H1 (cell line): ENCODE measurements at regions of chr6 and their contacts with region 1.

Region 1: GRCh38 chr6:41581381-41581991 is 35.3 kb downstream of the FOXP4 start:
- DNase-seq: no peak
- H3K4me3 ChIP-seq: no peak overlapping the region
- H3K27ac ChIP-seq: no peak overlapping the region
- H3K4me1 ChIP-seq: peaks cover 16 to 48% (median 36%) of the 10 kb centered on the region in 4 experiments
- H3K27me3 ChIP-seq: no peaks in the 10 kb centered on the region
- CTCF ChIP-seq: no peak
- EP300 ChIP-seq: no peak
- POLR2A ChIP-seq: no peak
- RAD21 ChIP-seq: no peak

Region 2: GRCh38 chr6:41560431-41561192 is 20.9 kb before region 1 on chr6:
- CTCF ChIA-PET with region 1: interaction called, 7 read pairs
- POLR2A ChIA-PET with region 1: interaction called, 24 read pairs
- DNase-seq: peak in 1 of 2 experiments; percentile 80
- H3K4me3 ChIP-seq: peak overlapping the region; percentile 56 to 76 (median 72)
- H3K27ac ChIP-seq: no peak overlapping the region
- H3K4me1 ChIP-seq: peaks cover 24 to 39% (median 29%) of the 10 kb centered on the region in 4 experiments
- H3K27me3 ChIP-seq: peaks cover 0 to 16% (median 12%) of the 10 kb centered on the region in 4 experiments; a peak in 5 of 7 replicates
- CTCF ChIP-seq: no peak
- EP300 ChIP-seq: no peak
- POLR2A ChIP-seq: no peak
- RAD21 ChIP-seq: no peak

Region 3: DNA sequence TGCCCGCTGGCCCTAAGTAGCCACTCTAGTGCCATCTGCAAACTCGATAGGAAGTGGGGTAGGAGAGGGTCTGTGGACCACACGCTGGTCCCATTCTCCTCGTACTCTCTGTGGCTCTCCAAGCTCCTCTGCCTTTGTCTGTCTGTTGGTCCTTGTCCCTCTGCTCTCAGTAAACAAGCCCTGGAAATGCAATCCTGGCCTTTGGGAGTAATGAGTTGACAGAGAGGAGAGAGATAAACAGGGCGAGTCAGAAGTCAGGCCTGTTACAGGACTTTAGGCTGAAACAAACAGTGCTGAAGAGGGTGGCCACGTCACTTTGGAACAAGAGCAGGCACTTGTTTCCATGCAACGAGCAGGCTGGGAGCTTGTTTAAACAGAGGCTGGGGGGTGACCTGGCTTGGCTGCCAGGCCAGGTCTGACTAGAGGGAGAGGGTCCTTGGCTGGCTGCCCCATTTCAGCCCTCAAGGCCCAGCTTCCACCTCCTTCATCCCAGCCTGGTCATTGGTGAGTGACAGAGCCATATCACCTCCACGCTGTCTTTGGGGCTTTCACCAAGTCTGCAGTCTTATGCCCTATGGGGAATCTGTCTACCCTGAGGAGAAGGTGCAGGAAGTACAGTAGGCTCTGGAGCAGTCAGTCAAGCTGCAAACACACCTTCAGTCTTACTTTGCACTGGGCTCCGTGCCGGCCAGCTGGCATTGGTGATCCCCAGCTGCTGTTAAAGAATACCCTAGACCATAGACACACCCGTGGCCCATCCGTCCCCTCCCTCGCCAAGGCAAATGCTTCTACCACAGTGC is 12.7 kb before region 1 on chr6:
- CTCF ChIA-PET with region 1: interaction called, 6 read pairs
- POLR2A ChIA-PET with region 1: interaction called, 26 read pairs
- DNase-seq: no peak
- H3K4me3 ChIP-seq: 0 out of 8 replicates have a peak overlapping the region, but pooled peaks of 1 of the 4 experiments have one; percentile 28
- H3K27ac ChIP-seq: no peak overlapping the region
- H3K4me1 ChIP-seq: peaks cover 22 to 42% (median 33%) of the 10 kb centered on the region in 4 experiments
- H3K27me3 ChIP-seq: no peaks in the 10 kb centered on the region
- CTCF ChIP-seq: no peak
- EP300 ChIP-seq: no peak
- POLR2A ChIP-seq: no peak
- RAD21 ChIP-seq: no peak

Region 4: DNA sequence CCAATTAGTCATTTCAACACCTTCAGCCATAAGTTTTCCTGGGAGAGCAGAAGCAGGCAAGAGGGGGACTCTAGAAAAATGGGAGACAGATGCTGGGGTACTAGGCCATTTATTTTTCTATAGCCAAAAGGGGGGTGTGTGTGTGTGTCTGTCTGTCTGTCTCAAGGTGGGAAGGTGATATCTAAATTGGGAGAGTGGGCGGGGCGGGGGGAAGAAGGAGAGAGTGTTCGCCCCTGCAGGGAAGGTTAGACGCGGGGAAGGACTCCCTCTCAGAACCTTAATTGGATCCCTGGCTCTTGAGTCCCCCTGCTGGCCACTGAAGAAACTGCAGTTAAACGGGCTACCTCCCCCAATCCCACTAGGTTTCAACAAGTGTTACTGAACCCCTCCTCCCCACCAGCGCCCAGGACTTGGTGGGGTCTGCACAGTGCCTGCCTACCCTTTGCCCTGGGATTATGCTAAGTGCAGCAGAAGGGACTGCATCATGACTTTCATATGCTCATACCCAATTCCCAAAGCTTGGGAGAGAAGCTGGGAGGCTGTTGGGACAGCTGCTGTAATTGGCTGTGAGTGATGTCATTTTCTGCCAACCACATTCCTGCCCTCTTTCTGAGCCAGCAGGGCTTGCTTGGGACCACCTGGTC is 10.5 kb after region 1 on chr6:
- CTCF ChIA-PET with region 1: interaction called, 51 read pairs
- POLR2A ChIA-PET with region 1: interaction called, 4 read pairs
- DNase-seq: peak in 1 of 2 experiments; percentile 97
- H3K4me3 ChIP-seq: no peak overlapping the region
- H3K27ac ChIP-seq: no peak overlapping the region
- H3K4me1 ChIP-seq: peaks cover 3 to 17% (median 9%) of the 10 kb centered on the region in 4 experiments
- H3K27me3 ChIP-seq: no peaks in the 10 kb centered on the region
- CTCF ChIP-seq: peak in 2 of 3 experiments; percentile 90 to 91; a peak in 3 of 4 replicates
- EP300 ChIP-seq: no peak
- POLR2A ChIP-seq: no peak
- RAD21 ChIP-seq: peak; percentile 95 to 96

Region 5: DNA sequence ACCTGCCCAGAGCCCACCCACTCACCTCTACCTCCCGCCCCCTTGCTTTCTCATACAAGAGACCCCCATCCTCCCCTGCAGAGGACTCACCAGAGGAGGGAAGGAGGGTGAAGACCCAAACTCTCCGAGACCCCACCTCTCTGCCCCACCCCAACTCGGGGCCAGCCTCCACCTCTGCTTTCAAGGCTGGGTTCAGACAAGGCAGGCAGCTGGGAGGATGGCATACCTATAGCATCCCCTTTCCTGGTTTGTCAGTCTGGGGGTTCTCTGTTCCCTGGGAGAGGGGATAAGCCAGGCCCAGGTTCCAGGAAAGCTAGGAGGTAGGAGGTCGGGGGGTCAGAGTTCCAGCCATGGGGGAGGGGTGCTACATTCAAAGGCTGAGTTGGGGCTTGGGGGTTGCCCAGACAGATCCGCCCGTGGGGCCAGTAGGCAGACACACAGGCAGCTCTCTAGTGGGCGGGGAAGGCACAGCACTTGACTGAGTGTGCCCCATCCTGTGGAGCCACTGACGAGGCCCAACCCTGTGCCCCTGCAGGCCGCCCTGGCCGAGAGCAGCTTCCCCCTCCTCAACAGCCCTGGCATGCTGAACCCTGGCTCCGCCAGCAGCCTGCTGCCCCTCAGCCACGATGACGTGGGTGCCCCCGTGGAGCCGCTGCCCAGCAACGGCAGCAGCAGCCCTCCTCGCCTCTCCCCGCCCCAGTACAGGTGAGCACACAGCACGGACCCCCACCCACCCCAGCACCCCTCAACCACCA is 15.9 kb after region 1 on chr6:
- CTCF ChIA-PET with region 1: interaction called, 51 read pairs
- POLR2A ChIA-PET with region 1: interaction called, 4 read pairs
- DNase-seq: no peak
- H3K4me3 ChIP-seq: no peak overlapping the region
- H3K27ac ChIP-seq: no peak overlapping the region
- H3K4me1 ChIP-seq: peaks cover 0 to 27% (median 16%) of the 10 kb centered on the region in 4 experiments; a peak in 6 of 7 replicates
- H3K27me3 ChIP-seq: no peaks in the 10 kb centered on the region
- CTCF ChIP-seq: no peak
- EP300 ChIP-seq: no peak
- POLR2A ChIP-seq: no peak
- RAD21 ChIP-seq: no peak